ENCODE measurements at regions of chr5 and their contacts with region 1.

Region 1: DNA sequence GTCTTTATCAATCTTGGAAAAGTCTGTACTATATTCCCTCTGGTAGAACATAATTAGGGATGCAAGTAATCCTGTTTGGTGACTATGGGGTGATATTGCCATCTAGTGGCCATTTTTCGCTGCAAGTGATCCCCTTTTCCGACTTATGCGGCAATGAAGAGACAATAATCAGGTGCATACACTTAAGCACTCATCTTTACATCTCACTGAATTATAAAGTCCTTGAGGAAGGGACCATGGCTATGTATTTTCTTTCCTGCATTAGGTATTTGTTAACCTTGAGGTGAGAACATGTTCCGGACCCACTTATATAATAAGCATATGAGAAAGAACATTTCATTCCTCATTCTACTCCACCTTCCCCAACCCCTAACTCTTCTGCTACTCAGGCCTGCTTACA is 19.6 kb upstream of the LIX1 start:
- DNase-seq: peak; percentile 76
- H3K4me3 ChIP-seq: no peak overlapping the region
- H3K27ac ChIP-seq: no peak overlapping the region
- H3K4me1 ChIP-seq: no peaks in the 10 kb centered on the region
- H3K27me3 ChIP-seq: no peaks in the 10 kb centered on the region
- CTCF ChIP-seq: peak; percentile 75 to 90 (median 85)
- POLR2A ChIP-seq: no peak

Region 2: GRCh38 chr5:96614110-96614691 is 547.8 kb before region 1 on chr5:
- intact Hi-C with region 1: loop called (anchors 10 kb)
- DNase-seq: peak; percentile 72
- H3K4me3 ChIP-seq: no peak overlapping the region
- H3K27ac ChIP-seq: peak overlapping the region in 1 of 2 donors; percentile 15
- H3K4me1 ChIP-seq: no peaks in the 10 kb centered on the region
- H3K27me3 ChIP-seq: no peaks in the 10 kb centered on the region
- CTCF ChIP-seq: peak; percentile 31 to 83 (median 70)
- POLR2A ChIP-seq: no peak

Region 3: DNA sequence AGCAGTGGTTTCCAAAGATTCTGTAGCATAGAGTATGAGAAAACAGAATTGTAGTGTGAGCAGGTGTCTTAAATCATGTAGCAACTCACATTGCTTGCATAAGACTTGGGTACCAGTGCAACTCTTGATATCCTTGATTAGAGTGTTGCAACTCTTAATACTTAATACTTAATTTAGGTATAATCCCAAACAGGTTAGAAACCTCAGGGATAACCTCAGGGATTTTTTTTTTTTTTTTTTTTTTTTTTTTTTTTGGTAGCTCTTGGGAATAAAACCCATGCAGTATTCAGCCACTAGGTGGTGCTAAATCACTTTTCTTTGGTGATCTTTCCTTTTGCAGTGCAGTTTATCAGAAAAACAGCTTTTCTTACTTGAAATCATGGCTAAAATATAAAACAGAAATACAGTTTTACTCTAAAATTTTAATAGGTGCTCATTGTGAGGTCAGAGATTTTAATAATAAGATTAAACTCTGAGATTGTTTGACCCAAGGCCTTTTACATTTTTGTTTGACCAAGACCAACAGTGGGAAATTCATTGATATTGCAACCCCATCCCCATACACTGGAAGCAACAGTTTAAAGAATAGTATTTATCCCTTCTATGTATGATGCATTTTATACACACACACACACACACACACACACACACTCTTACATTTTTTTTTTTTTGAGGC is 409.6 kb before region 1 on chr5:
- intact Hi-C with region 1: loop called (anchors 5 kb)
- DNase-seq: peak; percentile 52
- H3K4me3 ChIP-seq: no peak overlapping the region
- H3K27ac ChIP-seq: no peak overlapping the region
- H3K4me1 ChIP-seq: no peaks in the 10 kb centered on the region
- H3K27me3 ChIP-seq: no peaks in the 10 kb centered on the region
- CTCF ChIP-seq: peak; percentile 34 to 51 (median 49)
- POLR2A ChIP-seq: no peak

Region 4: GRCh38 chr5:96868603-96869371 is 293.3 kb before region 1 on chr5:
- intact Hi-C with region 1: loop called (anchors 5 kb)
- DNase-seq: peak; percentile 38
- H3K4me3 ChIP-seq: no peak overlapping the region
- H3K27ac ChIP-seq: no peak overlapping the region
- H3K4me1 ChIP-seq: no peaks in the 10 kb centered on the region
- H3K27me3 ChIP-seq: no peaks in the 10 kb centered on the region
- CTCF ChIP-seq: peak; percentile 49 to 91 (median 72)
- POLR2A ChIP-seq: no peak

Region 5: GRCh38 chr5:96934708-96935558 is 227.1 kb before region 1 on chr5:
- intact Hi-C with region 1: loop called (anchors 5 kb)
- DNase-seq: peak; percentile 91
- H3K4me3 ChIP-seq: peak overlapping the region; percentile 83 to 94
- H3K27ac ChIP-seq: peak overlapping the region; percentile 95 to 96
- H3K4me1 ChIP-seq: peaks cover 6% of the 10 kb centered on the region
- H3K27me3 ChIP-seq: no peaks in the 10 kb centered on the region
- CTCF ChIP-seq: peak in 2 of 4 experiments; percentile 32 to 39
- POLR2A ChIP-seq: peak; percentile 33

Region 6: DNA sequence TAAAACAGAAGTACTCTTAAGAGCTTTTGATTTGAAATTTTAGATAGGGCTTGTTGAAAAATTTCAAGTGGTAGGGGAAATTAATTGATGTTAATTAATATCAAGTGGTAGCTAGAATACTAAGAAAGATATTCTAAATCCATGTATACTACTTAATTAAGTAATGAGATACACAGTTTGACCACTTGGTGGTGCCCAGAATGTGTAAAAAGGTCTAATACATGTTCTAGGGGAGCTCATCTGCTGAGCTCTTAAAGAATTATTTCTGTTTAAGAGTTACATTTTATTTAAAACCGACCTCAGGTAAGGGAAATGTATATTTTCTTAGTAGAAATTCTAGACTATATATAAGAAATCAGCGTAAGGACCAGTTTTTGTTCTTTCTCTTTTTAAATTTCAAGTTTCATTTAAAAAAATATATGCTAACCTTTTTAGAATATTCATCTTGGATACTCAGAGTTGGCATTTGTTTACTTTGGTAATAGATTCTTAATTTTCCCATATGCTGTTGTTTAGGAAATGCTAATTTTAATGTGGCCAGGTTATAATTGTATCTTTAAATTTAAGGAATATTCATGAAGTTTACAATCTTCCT is 164.7 kb before region 1 on chr5:
- intact Hi-C with region 1: loop called (anchors 10 kb)
- DNase-seq: no peak
- H3K4me3 ChIP-seq: no peak overlapping the region
- H3K27ac ChIP-seq: no peak overlapping the region
- H3K4me1 ChIP-seq: no peaks in the 10 kb centered on the region
- H3K27me3 ChIP-seq: no peaks in the 10 kb centered on the region
- CTCF ChIP-seq: peak in 3 of 4 experiments; percentile 24 to 59 (median 55)
- POLR2A ChIP-seq: no peak

Region 7: DNA sequence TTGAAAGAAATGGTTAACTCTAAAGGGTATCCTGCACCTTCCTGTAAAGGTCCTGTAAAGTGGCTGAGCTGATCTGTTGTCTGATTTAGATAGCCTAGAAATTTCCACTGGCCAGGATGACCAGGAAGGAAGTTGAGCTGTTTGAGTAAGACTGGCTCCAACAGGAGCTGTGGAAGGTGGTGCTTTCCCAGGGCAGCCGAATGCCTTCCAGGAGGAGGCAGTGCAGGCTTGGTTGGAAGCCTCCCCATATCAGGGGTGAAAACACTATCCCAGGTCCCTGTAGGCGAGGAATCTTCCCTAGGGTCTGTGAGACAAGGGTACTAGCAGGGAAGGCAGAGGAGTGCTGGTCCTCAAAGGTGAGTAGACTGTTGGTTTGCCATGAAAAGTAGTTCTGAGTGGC is 118.0 kb before region 1 on chr5:
- intact Hi-C with region 1: loop called (anchors 5 kb)
- DNase-seq: no peak
- H3K4me3 ChIP-seq: no peak overlapping the region
- H3K27ac ChIP-seq: no peak overlapping the region
- H3K4me1 ChIP-seq: no peaks in the 10 kb centered on the region
- H3K27me3 ChIP-seq: no peaks in the 10 kb centered on the region
- CTCF ChIP-seq: peak in 2 of 4 experiments; percentile 21 to 22
- POLR2A ChIP-seq: no peak

Region 8: GRCh38 chr5:97101189-97101910 is 60.7 kb before region 1 on chr5:
- intact Hi-C with region 1: no loop called
- DNase-seq: no peak
- H3K4me3 ChIP-seq: no peak overlapping the region
- H3K27ac ChIP-seq: peak overlapping the region in 1 of 2 donors; percentile 18
- H3K4me1 ChIP-seq: no peaks in the 10 kb centered on the region
- H3K27me3 ChIP-seq: no peaks in the 10 kb centered on the region
- CTCF ChIP-seq: no peak
- POLR2A ChIP-seq: no peak

Region 9: GRCh38 chr5:97208714-97209113 is 46.7 kb after region 1 on chr5:
- intact Hi-C with region 1: no loop called
- DNase-seq: no peak
- H3K4me3 ChIP-seq: no peak overlapping the region
- H3K27ac ChIP-seq: no peak overlapping the region
- H3K4me1 ChIP-seq: no peaks in the 10 kb centered on the region
- H3K27me3 ChIP-seq: no peaks in the 10 kb centered on the region
- CTCF ChIP-seq: no peak
- POLR2A ChIP-seq: no peak